ENCODE measurements at regions of chr22 and their contacts with region 1.

Region 1: GRCh38 chr22:20268279-20269012 is at the start of gene RTN4R:
- DNase-seq: peak in 7 of 9 donors; percentile 41 to 73 (median 52)
- ATAC-seq: peak; percentile 84
- H3K4me3 ChIP-seq: no peak within 1 kb of the TSS
- H3K4me3 Mint-ChIP-seq: peak within 1 kb of the TSS; percentile 47 to 79 (median 74)
- H3K27ac ChIP-seq: peak within 1 kb of the TSS; percentile 8
- H3K27ac Mint-ChIP-seq: peak within 1 kb of the TSS in 1 of 9 donors; percentile 69
- H3K4me1 ChIP-seq: peaks cover 0 to 4% of the 10 kb centered on the region in 2 donors
- H3K4me1 Mint-ChIP-seq: peaks cover 0 to 7% (median 5%) of the 10 kb centered on the region in 7 donors
- H3K27me3 ChIP-seq: no peaks in the 10 kb centered on the region
- H3K27me3 Mint-ChIP-seq: peaks cover 0 to 6% (median 0%) of the 10 kb centered on the region in 5 donors
- total RNA-seq, gene RTN4R: 0.98 to 2.7 (median 1.8) TPM

Region 2: DNA sequence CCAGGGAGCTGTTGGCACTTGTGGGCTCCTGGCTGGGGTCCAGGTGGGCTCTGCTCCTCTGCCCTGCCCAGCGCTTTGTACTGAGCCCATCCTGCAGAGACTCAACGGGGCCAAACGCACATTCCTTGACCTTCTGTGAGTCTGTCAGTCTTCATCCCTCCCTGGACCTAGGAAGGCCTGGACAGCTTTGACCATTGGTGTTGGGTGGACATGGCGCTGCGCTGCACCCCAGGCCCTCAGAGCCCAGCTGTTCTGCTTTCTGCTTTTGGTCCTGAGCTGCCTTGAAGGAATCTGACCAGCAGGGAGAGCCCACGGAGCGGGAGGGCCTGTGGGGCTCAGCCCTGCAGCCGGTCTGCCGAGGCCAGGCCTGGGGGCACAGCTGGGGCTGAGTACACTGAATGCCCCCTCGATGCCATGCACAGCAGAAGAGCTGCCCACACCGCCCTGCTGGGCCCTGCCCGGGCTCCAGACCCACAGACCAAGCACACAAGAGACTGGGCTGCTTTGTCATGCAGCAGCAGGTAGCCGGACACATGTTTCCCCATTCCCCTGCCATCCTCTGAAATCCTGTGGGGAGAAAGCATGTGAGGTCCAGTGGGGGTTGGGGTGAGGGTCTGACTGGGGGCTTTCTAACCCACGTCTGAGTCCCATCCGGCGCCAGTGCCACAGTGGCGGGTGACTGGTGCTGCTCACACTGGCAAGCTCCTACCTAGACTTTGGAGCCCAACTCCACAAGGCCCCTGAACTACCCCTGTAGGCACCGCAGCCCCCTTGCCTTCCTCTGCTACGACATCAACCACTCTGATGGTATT is 93.5 kb before region 1 on chr22:
- CTCF ChIA-PET with region 1: no interaction called
- POLR2A ChIA-PET with region 1: no interaction called
- intact Hi-C with region 1: loop called in 1 of 2 experiments (anchors 1 kb)
- DNase-seq: no peak
- ATAC-seq: no peak
- H3K4me3 ChIP-seq: no peak overlapping the region
- H3K4me3 Mint-ChIP-seq: no peak overlapping the region
- H3K27ac ChIP-seq: no peak overlapping the region
- H3K27ac Mint-ChIP-seq: no peak overlapping the region
- H3K4me1 ChIP-seq: no peaks in the 10 kb centered on the region
- H3K4me1 Mint-ChIP-seq: peaks cover 0 to 2% (median 0%) of the 10 kb centered on the region in 7 donors
- H3K27me3 ChIP-seq: no peaks in the 10 kb centered on the region
- H3K27me3 Mint-ChIP-seq: no peaks in the 10 kb centered on the region

Measured in naive thymus-derived CD4-positive, alpha-beta T cell (primary cell).